ENCODE measurements at regions of chr17 and their contacts with region 1.

Region 1: GRCh38 chr17:43543771-43544575 is 2.2 kb downstream of the ETV4 start:
- DNase-seq: no peak
- H3K4me3 ChIP-seq: no peak overlapping the region
- H3K27ac ChIP-seq: no peak overlapping the region
- H3K4me1 ChIP-seq: peaks cover 10% of the 10 kb centered on the region
- H3K27me3 ChIP-seq: no peaks in the 10 kb centered on the region
- CTCF ChIP-seq: no peak
- EP300 ChIP-seq: no peak
- POLR2A ChIP-seq: no peak

Region 2: GRCh38 chr17:43528349-43528987 is 15.5 kb before region 1 on chr17:
- intact Hi-C with region 1: loop called in 1 of 4 experiments (anchors 2 kb)
- DNase-seq: peak in 1 of 5 donors; percentile 35
- H3K4me3 ChIP-seq: no peak overlapping the region
- H3K27ac ChIP-seq: no peak overlapping the region
- H3K4me1 ChIP-seq: peaks cover 8% of the 10 kb centered on the region
- H3K27me3 ChIP-seq: no peaks in the 10 kb centered on the region
- CTCF ChIP-seq: no peak
- EP300 ChIP-seq: no peak
- POLR2A ChIP-seq: no peak

Region 3: GRCh38 chr17:43578699-43579565 is 35.0 kb after region 1 on chr17:
- intact Hi-C with region 1: no loop called
- DNase-seq: no peak
- H3K4me3 ChIP-seq: no peak overlapping the region
- H3K27ac ChIP-seq: no peak overlapping the region
- H3K4me1 ChIP-seq: no peaks in the 10 kb centered on the region
- H3K27me3 ChIP-seq: no peaks in the 10 kb centered on the region
- CTCF ChIP-seq: no peak
- EP300 ChIP-seq: no peak
- POLR2A ChIP-seq: no peak

Measured in ovary (tissue), 10 donors.